Posterior vena cava (tissue), 2 donors: ENCODE measurements at regions of chrX and their contacts with region 1.

Region 1: GRCh38 chrX:31661280-31661679 is 589.4 kb upstream of the FTHL17 start:
- DNase-seq: no peak

Region 2: DNA sequence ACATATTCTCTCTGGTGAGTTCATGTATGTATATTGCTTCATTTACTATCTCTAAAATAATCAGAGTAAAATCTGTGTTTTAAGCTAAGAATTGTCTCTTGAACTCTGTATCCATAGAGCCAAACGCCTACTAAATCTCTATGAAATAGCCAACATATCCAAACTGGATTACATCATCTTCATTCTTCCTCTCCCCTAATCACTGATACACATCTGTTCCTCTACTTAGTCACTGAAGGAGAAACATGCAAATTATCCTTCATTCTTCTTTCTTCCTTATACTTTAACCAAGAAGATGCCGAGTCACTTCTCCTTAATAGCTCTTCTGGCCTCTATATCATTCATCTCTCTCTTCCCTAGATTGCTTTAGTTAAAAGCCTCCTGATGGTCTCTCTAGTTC is 40.9 kb after region 1 on chrX:
- intact Hi-C with region 1: loop called in 1 of 2 experiments (anchors 2 kb)
- DNase-seq: no peak